ENCODE measurements at regions of chr11 and their contacts with region 1.

Region 1: GRCh38 chr11:2305140-2305840 is 3.5 kb downstream of the TSPAN32 start:
- DNase-seq: peak in 1 of 2 donors; percentile 91
- H3K4me3 ChIP-seq: no peak overlapping the region
- H3K27ac ChIP-seq: peak overlapping the region; percentile 19 to 67
- H3K4me1 ChIP-seq: peaks cover 32 to 44% of the 10 kb centered on the region in 2 donors
- H3K27me3 ChIP-seq: no peaks in the 10 kb centered on the region
- CTCF ChIP-seq: peak; percentile 87 to 92 (median 88)

Region 2: DNA sequence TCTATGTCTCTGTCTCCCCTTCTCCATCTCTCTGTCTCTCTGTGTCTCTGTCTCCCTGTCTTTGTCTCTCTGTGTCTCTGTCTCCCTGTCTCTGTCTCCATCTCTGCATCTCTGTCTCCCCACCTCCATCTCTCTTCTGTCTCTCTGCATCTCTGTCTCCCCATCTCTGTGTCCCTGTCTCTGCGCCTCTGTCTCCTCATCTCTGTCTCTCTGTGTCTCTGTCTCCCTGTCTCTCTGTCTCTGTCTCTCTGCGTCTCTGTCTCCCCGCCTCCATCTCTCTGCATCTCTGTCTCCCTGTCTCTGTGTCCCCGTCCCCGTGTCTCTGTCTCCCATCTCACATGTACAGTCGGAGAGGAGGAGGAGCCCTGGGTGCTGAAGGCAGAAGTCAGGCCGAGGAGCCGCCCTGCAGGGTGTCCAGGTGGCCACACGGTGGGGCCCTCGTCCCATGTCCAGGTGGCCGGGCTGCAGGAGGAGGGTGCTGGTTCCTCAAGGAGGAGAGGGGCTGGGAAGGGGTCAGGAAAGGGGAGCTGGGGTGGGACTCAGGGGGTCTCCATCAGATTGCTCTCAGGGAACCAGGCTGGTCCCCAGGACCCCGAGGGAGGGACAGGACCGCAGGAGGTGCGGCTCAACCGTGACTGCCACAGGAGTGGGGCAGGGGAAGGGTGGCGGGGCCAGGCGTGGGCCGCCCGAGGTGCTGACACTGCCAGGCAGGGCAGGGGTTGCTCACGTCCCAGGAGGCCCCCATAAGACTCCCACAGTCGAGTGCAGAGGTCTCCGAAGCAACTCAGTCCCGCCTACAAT is 108.1 kb before region 1 on chr11:
- intact Hi-C with region 1: loop called (anchors 5 kb)
- DNase-seq: peak; percentile 17 to 84
- H3K4me3 ChIP-seq: no peak overlapping the region
- H3K27ac ChIP-seq: no peak overlapping the region
- H3K4me1 ChIP-seq: no peaks in the 10 kb centered on the region
- H3K27me3 ChIP-seq: no peaks in the 10 kb centered on the region
- CTCF ChIP-seq: peak; percentile 69 to 86 (median 85)

Region 3: GRCh38 chr11:2208691-2209369 is 96.5 kb before region 1 on chr11:
- intact Hi-C with region 1: no loop called
- DNase-seq: peak in 1 of 2 donors; percentile 55
- H3K4me3 ChIP-seq: no peak overlapping the region
- H3K27ac ChIP-seq: no peak overlapping the region
- H3K4me1 ChIP-seq: no peaks in the 10 kb centered on the region
- H3K27me3 ChIP-seq: no peaks in the 10 kb centered on the region
- CTCF ChIP-seq: no peak

Region 4: GRCh38 chr11:2377511-2378443 is 72.5 kb after region 1 on chr11:
- intact Hi-C with region 1: loop called (anchors 2 kb)
- DNase-seq: peak in 1 of 2 donors; percentile 87
- H3K4me3 ChIP-seq: peak overlapping the region; percentile 79 to 98
- H3K27ac ChIP-seq: peak overlapping the region; percentile 97 to 99
- H3K4me1 ChIP-seq: peaks cover 14 to 37% of the 10 kb centered on the region in 2 donors
- H3K27me3 ChIP-seq: no peaks in the 10 kb centered on the region
- CTCF ChIP-seq: no peak

Region 5: DNA sequence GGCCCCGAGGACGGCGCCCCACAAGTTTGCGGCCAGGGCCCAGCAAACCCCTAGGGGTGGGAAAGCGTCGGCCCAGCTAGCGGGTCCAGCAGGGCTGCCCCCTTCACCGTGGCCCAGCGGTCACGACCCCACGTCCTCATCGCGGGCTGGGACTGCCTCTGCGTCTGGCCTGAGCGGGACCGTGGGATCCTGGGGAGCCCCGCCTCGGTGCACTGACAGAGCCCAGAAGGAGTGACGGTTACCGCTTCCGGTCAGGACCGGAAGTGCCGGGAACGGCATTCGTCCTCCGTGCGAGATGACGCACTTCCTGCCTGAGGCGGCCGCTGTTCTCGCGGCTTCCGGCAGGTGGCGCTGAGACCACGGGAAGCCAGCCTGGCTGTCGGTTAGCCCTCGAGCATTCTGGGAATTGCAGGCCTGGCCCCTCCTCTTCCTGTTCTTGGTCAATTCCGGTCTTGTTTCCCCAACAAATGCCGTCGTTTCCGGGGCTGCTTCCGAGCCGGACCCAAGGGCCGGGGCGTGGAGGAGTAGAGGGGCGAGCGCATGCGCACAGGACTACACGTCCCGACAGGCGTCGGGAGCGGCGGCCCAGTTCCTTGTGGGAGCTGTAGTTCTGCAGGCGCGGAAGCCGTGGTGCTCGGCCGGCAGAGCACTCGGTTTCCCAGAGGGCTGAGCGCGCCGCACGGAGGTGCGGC is 94.9 kb after region 1 on chr11 and contains the start of gene TSSC4:
- intact Hi-C with region 1: loop called (anchors 1 kb)
- DNase-seq: peak; percentile 99 to 100
- H3K4me3 ChIP-seq: peak within 1 kb of the TSS; percentile 89 to 93
- H3K27ac ChIP-seq: peak within 1 kb of the TSS; percentile 100
- H3K4me1 ChIP-seq: peaks cover 12 to 26% of the 10 kb centered on the region in 2 donors
- H3K27me3 ChIP-seq: no peaks in the 10 kb centered on the region
- CTCF ChIP-seq: peak; percentile 93 to 98 (median 97)
- total RNA-seq, gene TSSC4: 183 TPM

Region 6: GRCh38 chr11:2420502-2421225 is 115.4 kb after region 1 on chr11:
- intact Hi-C with region 1: loop called (anchors 1 kb)
- DNase-seq: peak in 1 of 2 donors; percentile 82
- H3K4me3 ChIP-seq: no peak overlapping the region
- H3K27ac ChIP-seq: no peak overlapping the region
- H3K4me1 ChIP-seq: peaks cover 0 to 3% of the 10 kb centered on the region in 2 donors
- H3K27me3 ChIP-seq: no peaks in the 10 kb centered on the region
- CTCF ChIP-seq: peak; percentile 90 to 96 (median 96)

Region 7: GRCh38 chr11:2532704-2533586 is 227.7 kb after region 1 on chr11:
- intact Hi-C with region 1: loop called (anchors 5 kb)
- DNase-seq: peak; percentile 38 to 93
- H3K4me3 ChIP-seq: peak overlapping the region; percentile 34 to 45
- H3K27ac ChIP-seq: no peak overlapping the region
- H3K4me1 ChIP-seq: peaks cover 0 to 3% of the 10 kb centered on the region in 2 donors
- H3K27me3 ChIP-seq: no peaks in the 10 kb centered on the region
- CTCF ChIP-seq: peak; percentile 98 to 99 (median 98)